ENCODE measurements at regions of chr12 and their contacts with region 1.

Region 1: GRCh38 chr12:5428332-5429221 is 3.3 kb upstream of the NTF3 start:
- DNase-seq: peak; percentile 44 to 74 (median 72)
- H3K4me3 ChIP-seq: peak overlapping the region in 2 of 7 experiments; percentile 30 to 59
- H3K27ac ChIP-seq: no peak overlapping the region
- H3K4me1 ChIP-seq: peaks cover 0 to 43% (median 33%) of the 10 kb centered on the region in 4 experiments
- H3K27me3 ChIP-seq: peaks cover 2 to 52% (median 14%) of the 10 kb centered on the region in 5 experiments

Region 2: DNA sequence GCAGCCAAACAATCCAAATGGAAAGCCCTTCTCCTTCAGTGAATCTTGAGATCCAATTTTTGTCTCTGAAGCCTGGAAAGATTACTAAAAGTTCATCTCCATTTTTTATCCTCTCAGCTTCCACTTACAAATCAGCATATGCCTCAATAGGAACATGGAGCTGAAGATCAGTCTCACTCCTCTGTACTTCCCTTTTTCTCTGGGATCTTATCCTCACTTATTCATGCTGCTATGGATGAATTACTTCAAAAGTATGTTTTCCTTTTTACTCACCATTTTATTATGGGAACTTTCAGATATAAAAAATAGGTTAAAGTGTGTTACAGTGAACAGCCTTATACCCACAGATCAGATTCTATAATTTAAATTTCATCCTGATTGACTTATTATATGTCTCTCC is 11.1 kb before region 1 on chr12:
- CTCF ChIA-PET with region 1: interaction called, 10 read pairs
- POLR2A ChIA-PET with region 1: no interaction called
- DNase-seq: no peak
- H3K4me3 ChIP-seq: no peak overlapping the region
- H3K27ac ChIP-seq: no peak overlapping the region
- H3K4me1 ChIP-seq: no peaks in the 10 kb centered on the region
- H3K27me3 ChIP-seq: no peaks in the 10 kb centered on the region

Region 3: GRCh38 chr12:5511644-5512600 is 83.3 kb after region 1 on chr12:
- CTCF ChIA-PET with region 1: interaction called, 39 read pairs
- POLR2A ChIA-PET with region 1: no interaction called
- DNase-seq: peak; percentile 57 to 79 (median 79)
- H3K4me3 ChIP-seq: peak overlapping the region in 3 of 7 experiments; percentile 5 to 42 (median 12)
- H3K27ac ChIP-seq: no peak overlapping the region
- H3K4me1 ChIP-seq: peaks cover 0 to 3% (median 1%) of the 10 kb centered on the region in 4 experiments
- H3K27me3 ChIP-seq: peaks cover 0 to 6% (median 0%) of the 10 kb centered on the region in 5 experiments

Measured in common myeloid progenitor, CD34-positive (primary cell).